Right ventricle myocardium superior (tissue), 1 donor: ENCODE measurements at regions of chr10 and their contacts with region 1.

Region 1: GRCh38 chr10:125060826-125061556 is 99.4 kb downstream of the CTBP2 start:
- DNase-seq: peak; percentile 92
- ATAC-seq: peak; percentile 77

Region 2: DNA sequence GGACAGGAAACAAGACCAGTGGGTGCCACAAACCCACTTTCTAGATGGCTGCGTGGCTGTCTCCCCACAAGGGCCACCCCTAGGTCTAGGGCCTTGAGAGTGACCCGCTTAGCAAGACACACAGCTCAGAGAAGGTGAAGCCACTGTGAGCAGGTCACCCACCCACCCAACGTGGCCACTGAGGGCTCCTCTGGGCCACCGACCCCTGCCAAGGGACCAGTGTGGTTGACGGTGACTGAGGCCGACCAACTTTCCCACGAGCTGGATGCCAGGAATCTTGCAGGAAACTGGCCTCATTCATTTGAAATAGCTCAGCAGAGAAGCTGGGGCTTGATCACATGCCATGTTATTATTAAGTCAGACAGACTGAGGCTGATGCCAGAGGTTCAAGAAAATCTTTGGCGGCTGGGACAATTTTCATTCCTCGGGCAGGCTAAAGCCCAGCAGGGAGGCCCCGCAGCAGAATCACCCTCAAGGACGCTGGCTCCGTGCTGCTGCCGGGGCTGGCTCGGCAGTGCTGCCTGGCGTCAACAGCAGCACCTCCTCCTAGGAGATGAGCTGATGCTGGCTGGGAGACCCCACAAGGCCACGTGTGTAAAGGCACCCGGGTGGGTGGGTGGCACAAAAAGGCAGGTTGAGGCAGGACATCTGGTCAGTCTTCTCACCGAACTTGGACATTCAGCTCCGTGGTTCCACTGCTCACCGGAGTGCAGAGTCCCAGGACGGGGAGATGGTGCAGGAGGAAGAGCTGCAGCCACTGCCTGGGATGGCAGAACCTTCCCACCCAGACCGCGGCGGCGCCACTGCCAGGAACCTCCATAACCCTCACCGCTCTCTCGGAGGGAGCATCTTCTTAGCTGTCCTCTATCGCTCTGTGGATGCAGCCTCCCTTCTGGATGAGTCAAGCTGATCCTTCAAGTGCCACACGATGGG is 61.3 kb before region 1 on chr10:
- intact Hi-C with region 1: loop called (anchors 5 kb)
- DNase-seq: peak; percentile 71
- ATAC-seq: peak; percentile 68

Region 3: GRCh38 chr10:125343118-125343925 is 282.3 kb after region 1 on chr10:
- intact Hi-C with region 1: no loop called
- DNase-seq: no peak
- ATAC-seq: no peak